CD8-positive, alpha-beta T cell (primary cell): ENCODE measurements at regions of chr6 and their contacts with region 1.

Region 1: DNA sequence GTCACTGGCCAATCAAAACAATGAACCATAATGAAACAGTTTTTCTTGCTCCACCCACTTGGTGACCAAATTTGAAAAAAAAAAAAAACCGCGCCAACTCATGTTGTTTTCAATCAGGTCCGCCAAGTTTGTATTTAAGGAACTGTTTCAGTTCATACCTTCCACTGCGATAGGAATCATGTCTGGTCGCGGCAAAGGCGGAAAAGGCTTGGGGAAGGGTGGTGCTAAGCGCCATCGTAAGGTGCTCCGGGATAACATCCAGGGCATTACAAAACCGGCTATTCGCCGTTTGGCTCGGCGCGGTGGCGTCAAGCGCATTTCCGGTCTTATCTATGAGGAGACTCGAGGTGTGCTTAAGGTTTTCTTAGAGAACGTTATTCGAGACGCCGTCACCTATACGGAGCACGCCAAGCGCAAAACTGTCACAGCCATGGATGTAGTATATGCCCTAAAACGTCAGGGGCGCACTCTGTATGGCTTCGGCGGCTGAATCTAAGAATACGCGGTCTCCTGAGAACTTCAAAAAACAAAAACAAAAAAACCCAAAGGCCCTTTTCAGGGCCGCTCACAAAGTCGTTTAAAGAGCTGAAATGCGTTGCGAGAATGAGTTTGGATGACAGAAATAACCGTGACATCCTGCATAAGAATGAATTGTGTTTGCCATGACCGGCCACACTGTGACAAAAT is 16.7 kb downstream of the HFE start:
- DNase-seq: peak; percentile 84 to 97 (median 89)
- ATAC-seq: peak; percentile 91
- H3K4me3 ChIP-seq: peak overlapping the region; percentile 52 to 58
- H3K4me3 Mint-ChIP-seq: peak overlapping the region; percentile 85
- H3K27ac ChIP-seq: peak overlapping the region; percentile 85 to 92
- H3K27ac Mint-ChIP-seq: peak overlapping the region; percentile 98
- H3K4me1 ChIP-seq: peaks cover 7% of the 10 kb centered on the region
- H3K4me1 Mint-ChIP-seq: peaks cover 17% of the 10 kb centered on the region
- H3K27me3 ChIP-seq: no peaks in the 10 kb centered on the region
- H3K27me3 Mint-ChIP-seq: no peaks in the 10 kb centered on the region
- CTCF ChIP-seq: peak; percentile 67

Region 2: DNA sequence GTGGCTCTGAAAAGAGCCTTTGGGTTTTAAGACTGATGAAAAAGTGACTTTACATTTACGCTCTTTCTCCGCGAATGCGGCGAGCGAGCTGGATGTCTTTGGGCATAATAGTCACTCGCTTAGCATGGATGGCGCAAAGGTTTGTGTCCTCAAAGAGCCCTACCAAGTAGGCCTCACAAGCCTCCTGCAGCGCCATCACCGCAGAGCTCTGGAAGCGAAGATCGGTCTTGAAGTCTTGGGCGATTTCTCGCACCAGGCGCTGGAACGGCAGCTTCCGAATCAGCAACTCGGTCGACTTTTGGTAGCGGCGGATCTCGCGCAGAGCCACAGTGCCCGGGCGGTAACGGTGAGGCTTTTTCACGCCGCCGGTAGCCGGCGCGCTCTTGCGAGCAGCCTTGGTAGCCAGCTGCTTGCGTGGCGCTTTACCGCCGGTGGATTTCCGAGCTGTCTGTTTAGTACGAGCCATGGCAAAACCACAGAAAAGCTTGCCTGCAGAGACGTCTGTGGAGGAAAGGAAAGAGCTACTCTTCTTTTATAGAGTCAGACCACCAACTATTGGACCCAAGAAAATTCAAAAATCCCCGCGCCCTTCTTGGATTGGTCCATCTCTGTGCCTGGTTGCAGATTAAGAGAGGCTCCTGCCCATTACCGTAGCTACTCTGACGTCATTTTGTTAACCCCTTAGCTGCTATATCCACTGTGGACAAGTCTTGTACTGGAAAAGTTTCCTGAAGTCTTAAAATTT is 72.1 kb before region 1 on chr6:
- CTCF ChIA-PET with region 1: interaction called, 4 read pairs
- POLR2A ChIA-PET with region 1: interaction called, 34 read pairs
- intact Hi-C with region 1: loop called (anchors 1 to 2 kb)
- DNase-seq: peak; percentile 79 to 93 (median 88)
- ATAC-seq: peak; percentile 63
- H3K4me3 ChIP-seq: peak overlapping the region; percentile 68 to 71
- H3K4me3 Mint-ChIP-seq: peak overlapping the region; percentile 93
- H3K27ac ChIP-seq: peak overlapping the region; percentile 76 to 79
- H3K27ac Mint-ChIP-seq: peak overlapping the region; percentile 96
- H3K4me1 ChIP-seq: peaks cover 31% of the 10 kb centered on the region
- H3K4me1 Mint-ChIP-seq: peaks cover 46% of the 10 kb centered on the region
- H3K27me3 ChIP-seq: no peaks in the 10 kb centered on the region
- H3K27me3 Mint-ChIP-seq: no peaks in the 10 kb centered on the region
- CTCF ChIP-seq: no peak

Region 3: GRCh38 chr6:26054857-26055669 is 48.9 kb before region 1 on chr6:
- CTCF ChIA-PET with region 1: interaction called, 666 read pairs
- POLR2A ChIA-PET with region 1: interaction called, 87 read pairs
- intact Hi-C with region 1: loop called (anchors 2 kb)
- DNase-seq: peak; percentile 71 to 94 (median 88)
- ATAC-seq: peak; percentile 72
- H3K4me3 ChIP-seq: peak overlapping the region; percentile 75 to 85
- H3K4me3 Mint-ChIP-seq: peak overlapping the region; percentile 96
- H3K27ac ChIP-seq: peak overlapping the region; percentile 85 to 96
- H3K27ac Mint-ChIP-seq: peak overlapping the region; percentile 99
- H3K4me1 ChIP-seq: peaks cover 17% of the 10 kb centered on the region
- H3K4me1 Mint-ChIP-seq: peaks cover 23% of the 10 kb centered on the region
- H3K27me3 ChIP-seq: no peaks in the 10 kb centered on the region
- H3K27me3 Mint-ChIP-seq: no peaks in the 10 kb centered on the region
- CTCF ChIP-seq: no peak

Region 4: GRCh38 chr6:26065952-26066380 is 37.9 kb before region 1 on chr6:
- CTCF ChIA-PET with region 1: interaction called, 666 read pairs
- POLR2A ChIA-PET with region 1: interaction called, 87 read pairs
- intact Hi-C with region 1: no loop called
- DNase-seq: peak in 7 of 9 experiments; percentile 32 to 86 (median 58)
- ATAC-seq: peak; percentile 95
- H3K4me3 ChIP-seq: no peak overlapping the region
- H3K4me3 Mint-ChIP-seq: no peak overlapping the region
- H3K27ac ChIP-seq: no peak overlapping the region
- H3K27ac Mint-ChIP-seq: no peak overlapping the region
- H3K4me1 ChIP-seq: peaks cover 6% of the 10 kb centered on the region
- H3K4me1 Mint-ChIP-seq: peaks cover 5% of the 10 kb centered on the region
- H3K27me3 ChIP-seq: no peaks in the 10 kb centered on the region
- H3K27me3 Mint-ChIP-seq: peaks cover 1% of the 10 kb centered on the region
- CTCF ChIP-seq: peak; percentile 95

Region 5: GRCh38 chr6:26087284-26088115 is 16.4 kb before region 1 on chr6 and contains the start of gene HFE:
- CTCF ChIA-PET with region 1: interaction called, 71 read pairs
- POLR2A ChIA-PET with region 1: interaction called, 25 read pairs
- intact Hi-C with region 1: loop called in 1 of 2 experiments (anchors 2 kb)
- DNase-seq: peak in 7 of 9 experiments; percentile 10 to 59 (median 40)
- ATAC-seq: peak; percentile 35
- H3K4me3 ChIP-seq: peak within 1 kb of the TSS; percentile 75 to 84
- H3K4me3 Mint-ChIP-seq: peak within 1 kb of the TSS; percentile 88
- H3K27ac ChIP-seq: peak within 1 kb of the TSS; percentile 56 to 60
- H3K27ac Mint-ChIP-seq: peak within 1 kb of the TSS; percentile 81
- H3K4me1 ChIP-seq: peaks cover 27% of the 10 kb centered on the region
- H3K4me1 Mint-ChIP-seq: peaks cover 36% of the 10 kb centered on the region
- H3K27me3 ChIP-seq: peaks cover 0 to 2% of the 10 kb centered on the region in 2 experiments
- H3K27me3 Mint-ChIP-seq: no peaks in the 10 kb centered on the region
- CTCF ChIP-seq: no peak
- total RNA-seq, gene HFE: 0.30 to 0.44 TPM

Region 6: DNA sequence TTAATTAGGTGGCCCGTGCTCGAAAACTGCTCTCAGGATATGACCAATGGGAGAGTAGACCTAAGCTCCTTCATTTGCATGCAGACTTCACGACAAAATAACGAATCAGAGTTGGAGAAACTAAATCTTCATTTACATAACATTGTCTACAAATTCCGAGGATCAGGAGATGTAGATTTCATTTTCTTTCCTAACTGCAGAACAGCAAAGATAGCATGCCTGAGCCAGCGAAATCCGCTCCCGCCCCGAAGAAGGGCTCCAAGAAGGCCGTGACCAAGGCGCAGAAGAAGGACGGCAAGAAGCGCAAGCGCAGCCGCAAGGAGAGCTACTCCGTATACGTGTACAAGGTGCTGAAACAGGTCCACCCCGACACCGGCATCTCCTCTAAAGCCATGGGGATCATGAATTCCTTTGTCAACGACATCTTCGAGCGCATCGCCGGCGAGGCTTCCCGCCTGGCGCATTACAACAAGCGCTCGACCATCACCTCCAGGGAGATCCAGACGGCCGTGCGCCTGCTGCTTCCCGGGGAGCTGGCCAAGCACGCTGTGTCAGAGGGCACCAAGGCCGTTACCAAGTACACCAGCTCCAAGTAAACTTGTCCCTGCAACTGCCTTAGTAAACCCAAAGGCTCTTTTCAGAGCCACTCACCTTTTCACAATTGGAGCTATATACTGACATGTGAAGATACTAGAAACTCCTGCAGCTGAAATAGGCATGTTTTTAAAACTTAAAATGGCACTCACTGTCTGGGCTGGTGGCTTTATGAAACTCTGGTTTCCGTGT is 79.9 kb after region 1 on chr6:
- CTCF ChIA-PET with region 1: no interaction called
- POLR2A ChIA-PET with region 1: interaction called, 14 read pairs
- intact Hi-C with region 1: no loop called
- DNase-seq: peak in 7 of 9 experiments; percentile 33 to 90 (median 59)
- ATAC-seq: peak; percentile 88
- H3K4me3 ChIP-seq: peak overlapping the region; percentile 60 to 71
- H3K4me3 Mint-ChIP-seq: peak overlapping the region; percentile 100
- H3K27ac ChIP-seq: peak overlapping the region; percentile 61 to 76
- H3K27ac Mint-ChIP-seq: peak overlapping the region; percentile 99
- H3K4me1 ChIP-seq: peaks cover 20% of the 10 kb centered on the region
- H3K4me1 Mint-ChIP-seq: peaks cover 42% of the 10 kb centered on the region
- H3K27me3 ChIP-seq: no peaks in the 10 kb centered on the region
- H3K27me3 Mint-ChIP-seq: no peaks in the 10 kb centered on the region
- CTCF ChIP-seq: no peak

Region 7: DNA sequence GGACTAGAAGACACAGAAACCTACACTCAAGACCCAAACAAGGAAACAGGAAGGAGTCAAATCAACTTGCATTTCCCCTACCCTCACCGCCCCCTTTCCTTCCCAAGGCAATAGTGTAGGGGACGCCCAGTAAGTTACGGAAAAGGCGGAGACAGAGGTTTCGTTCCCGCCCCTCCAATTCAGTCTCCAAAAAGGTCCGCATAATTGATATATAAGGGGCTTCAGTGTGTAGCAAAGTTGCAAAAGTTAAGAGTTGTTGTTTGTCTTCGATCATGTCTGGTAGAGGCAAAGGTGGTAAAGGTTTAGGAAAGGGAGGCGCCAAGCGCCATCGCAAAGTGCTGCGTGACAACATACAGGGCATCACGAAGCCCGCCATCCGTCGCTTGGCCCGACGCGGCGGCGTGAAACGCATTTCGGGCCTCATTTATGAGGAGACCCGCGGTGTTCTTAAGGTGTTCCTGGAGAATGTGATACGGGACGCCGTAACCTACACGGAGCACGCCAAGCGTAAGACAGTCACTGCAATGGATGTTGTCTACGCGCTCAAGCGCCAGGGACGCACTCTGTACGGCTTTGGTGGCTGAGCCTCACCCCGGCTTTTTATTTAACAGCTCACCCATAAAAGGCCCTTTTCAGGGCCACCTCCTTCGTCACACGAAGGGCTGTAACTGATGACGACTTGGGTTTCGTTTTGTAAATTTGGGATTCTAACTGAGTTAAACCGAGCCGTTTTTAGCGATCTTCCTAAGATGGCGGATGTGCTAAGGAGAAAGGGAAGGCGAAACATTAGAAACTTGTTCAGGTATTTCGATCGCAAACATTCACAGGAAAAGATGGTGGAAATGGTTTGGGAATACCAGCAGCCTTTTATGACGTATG is 136.5 kb after region 1 on chr6:
- CTCF ChIA-PET with region 1: no interaction called
- POLR2A ChIA-PET with region 1: no interaction called
- intact Hi-C with region 1: loop called in 1 of 2 experiments (anchors 1 kb)
- DNase-seq: peak; percentile 40 to 93 (median 67)
- ATAC-seq: peak; percentile 81
- H3K4me3 ChIP-seq: peak overlapping the region; percentile 50 to 62
- H3K4me3 Mint-ChIP-seq: peak overlapping the region; percentile 88
- H3K27ac ChIP-seq: peak overlapping the region; percentile 74 to 88
- H3K27ac Mint-ChIP-seq: peak overlapping the region; percentile 98
- H3K4me1 ChIP-seq: peaks cover 8% of the 10 kb centered on the region
- H3K4me1 Mint-ChIP-seq: peaks cover 21% of the 10 kb centered on the region
- H3K27me3 ChIP-seq: no peaks in the 10 kb centered on the region
- H3K27me3 Mint-ChIP-seq: no peaks in the 10 kb centered on the region
- CTCF ChIP-seq: no peak